ENCODE measurements at regions of chr22 and their contacts with region 1.

Region 1: GRCh38 chr22:29689880-29690213 is 30.0 kb upstream of the CABP7 start:
- DNase-seq: peak; percentile 37
- ATAC-seq: peak; percentile 47
- H3K4me3 Mint-ChIP-seq: no peak overlapping the region
- H3K27ac Mint-ChIP-seq: no peak overlapping the region
- H3K4me1 Mint-ChIP-seq: no peaks in the 10 kb centered on the region
- H3K27me3 Mint-ChIP-seq: no peaks in the 10 kb centered on the region
- CTCF ChIP-seq: peak; percentile 57

Region 2: GRCh38 chr22:29663180-29663821 is 26.5 kb before region 1 on chr22:
- CTCF ChIA-PET with region 1: interaction called, 11 read pairs
- POLR2A ChIA-PET with region 1: no interaction called
- intact Hi-C with region 1: no loop called
- DNase-seq: no peak
- ATAC-seq: no peak
- H3K4me3 Mint-ChIP-seq: no peak overlapping the region
- H3K27ac Mint-ChIP-seq: no peak overlapping the region
- H3K4me1 Mint-ChIP-seq: peaks cover 2% of the 10 kb centered on the region
- H3K27me3 Mint-ChIP-seq: no peaks in the 10 kb centered on the region
- CTCF ChIP-seq: no peak

Region 3: GRCh38 chr22:29710922-29711593 is 21.2 kb after region 1 on chr22:
- CTCF ChIA-PET with region 1: no interaction called
- POLR2A ChIA-PET with region 1: no interaction called
- intact Hi-C with region 1: no loop called
- DNase-seq: no peak
- ATAC-seq: no peak
- H3K4me3 Mint-ChIP-seq: no peak overlapping the region
- H3K27ac Mint-ChIP-seq: no peak overlapping the region
- H3K4me1 Mint-ChIP-seq: no peaks in the 10 kb centered on the region
- H3K27me3 Mint-ChIP-seq: peaks cover 4% of the 10 kb centered on the region
- CTCF ChIP-seq: no peak

Region 4: DNA sequence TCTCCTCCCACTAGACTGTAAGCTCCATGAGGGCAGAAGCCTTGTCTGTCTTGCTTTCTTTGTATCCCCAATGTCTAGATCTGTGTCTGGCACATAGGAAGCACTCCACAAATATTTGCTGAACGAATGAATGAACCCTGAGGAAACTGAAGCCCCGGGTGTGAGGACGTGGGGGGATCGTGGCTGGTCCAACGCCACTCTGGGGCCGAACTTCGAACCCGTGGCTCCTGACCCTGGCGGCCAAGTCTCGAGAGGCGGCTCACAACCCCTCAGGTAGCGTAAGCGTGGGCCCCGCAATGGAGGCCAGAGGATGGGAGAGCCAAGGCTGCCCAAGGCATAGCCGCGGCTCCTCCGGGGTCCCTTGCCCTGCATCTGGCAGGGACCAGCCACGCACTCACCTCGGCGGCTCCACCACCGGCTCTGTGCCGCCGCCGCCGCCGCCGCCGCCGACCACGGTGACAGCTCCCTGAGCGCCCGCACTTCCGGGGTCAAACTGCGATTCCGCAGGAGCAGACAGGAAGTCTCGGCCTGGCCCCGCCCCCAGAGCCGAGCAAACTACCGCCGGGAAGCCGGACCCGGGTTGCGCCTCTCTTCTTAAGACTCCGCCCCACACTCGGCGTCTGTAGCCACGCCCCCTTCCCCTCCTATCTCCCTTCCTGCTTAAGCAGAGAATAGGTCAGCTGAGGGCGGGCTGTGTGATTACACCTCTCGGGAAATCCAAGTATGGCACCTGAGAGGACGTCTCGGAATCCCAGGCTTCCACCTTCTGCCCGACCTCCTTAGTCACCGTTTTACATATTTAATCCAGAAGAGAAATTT is 148.1 kb after region 1 on chr22 and contains the start of gene ASCC2:
- CTCF ChIA-PET with region 1: no interaction called
- POLR2A ChIA-PET with region 1: no interaction called
- intact Hi-C with region 1: no loop called
- DNase-seq: peak; percentile 100
- ATAC-seq: peak; percentile 99
- H3K4me3 Mint-ChIP-seq: peak within 1 kb of the TSS; percentile 95
- H3K27ac Mint-ChIP-seq: peak within 1 kb of the TSS; percentile 97
- H3K4me1 Mint-ChIP-seq: peaks cover 27% of the 10 kb centered on the region
- H3K27me3 Mint-ChIP-seq: no peaks in the 10 kb centered on the region
- CTCF ChIP-seq: no peak
- total RNA-seq, gene ASCC2: 55.3 to 58.5 TPM

Measured in activated CD8-positive, alpha-beta T cell treated with anti-CD3 and anti-CD28 coated beads for 36 hours (primary cell).